Caco-2 (cell line): ENCODE measurements at regions of chr2 and their contacts with region 1.

Region 1: DNA sequence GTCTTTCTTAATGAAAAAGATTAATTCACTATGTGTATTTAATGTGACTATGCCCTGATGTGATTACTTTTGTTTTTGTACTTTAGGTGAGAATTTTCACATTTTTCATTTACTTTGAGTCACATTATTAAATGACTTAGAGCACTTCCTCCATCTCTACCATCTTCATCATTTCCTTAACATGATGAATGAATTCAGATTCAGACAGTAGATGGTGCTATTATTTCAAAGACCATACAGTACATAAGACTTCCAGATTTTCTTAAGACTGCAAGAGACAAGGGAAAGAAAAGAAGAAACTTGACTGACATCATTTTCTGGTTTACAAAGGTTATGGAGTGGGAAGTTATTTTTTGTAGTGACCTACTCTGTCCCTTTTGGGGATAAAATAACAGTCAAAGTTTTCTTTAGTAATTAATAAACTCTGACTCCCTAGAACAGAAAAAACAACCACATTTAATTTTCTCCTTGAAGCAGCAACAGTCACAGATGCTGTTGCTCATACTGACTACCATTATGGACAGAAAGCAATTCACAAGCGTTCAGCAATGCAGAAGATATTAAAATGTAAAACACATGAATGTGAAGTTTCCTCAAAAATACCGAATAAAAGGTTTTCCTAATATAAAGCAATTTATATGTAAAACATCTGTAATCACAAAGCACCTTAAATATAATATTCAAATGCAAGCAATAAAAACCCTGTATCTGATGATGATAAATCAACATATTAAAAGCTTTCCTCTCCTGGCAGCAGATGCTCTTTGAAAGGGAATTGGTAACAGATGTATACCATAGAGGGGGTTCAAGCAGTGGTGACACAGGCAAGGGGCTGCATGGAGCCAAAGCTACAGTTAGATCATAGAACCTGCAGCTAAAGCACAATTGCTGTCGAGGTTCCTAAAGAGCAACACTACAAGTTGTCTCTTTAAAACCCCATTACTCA is 1010.9 kb upstream of the NXPH2 start:
- DNase-seq: no peak
- H3K4me3 ChIP-seq: no peak overlapping the region
- H3K4me3 Mint-ChIP-seq: no peak overlapping the region
- H3K27ac Mint-ChIP-seq: no peak overlapping the region
- H3K4me1 ChIP-seq: no peaks in the 10 kb centered on the region
- H3K4me1 Mint-ChIP-seq: no peaks in the 10 kb centered on the region
- H3K27me3 ChIP-seq: no peaks in the 10 kb centered on the region
- H3K27me3 Mint-ChIP-seq: peaks cover 7% of the 10 kb centered on the region
- CTCF ChIP-seq: no peak

Region 2: GRCh38 chr2:139704606-139705005 is 86.5 kb before region 1 on chr2:
- CTCF ChIA-PET with region 1: no interaction called
- POLR2A ChIA-PET with region 1: no interaction called
- intact Hi-C with region 1: no loop called
- DNase-seq: no peak
- H3K4me3 ChIP-seq: no peak overlapping the region
- H3K4me3 Mint-ChIP-seq: no peak overlapping the region
- H3K27ac Mint-ChIP-seq: no peak overlapping the region
- H3K4me1 ChIP-seq: no peaks in the 10 kb centered on the region
- H3K4me1 Mint-ChIP-seq: no peaks in the 10 kb centered on the region
- H3K27me3 ChIP-seq: no peaks in the 10 kb centered on the region
- H3K27me3 Mint-ChIP-seq: peaks cover 5% of the 10 kb centered on the region
- CTCF ChIP-seq: no peak

Region 3: GRCh38 chr2:139946693-139947092 is 155.6 kb after region 1 on chr2:
- CTCF ChIA-PET with region 1: no interaction called
- POLR2A ChIA-PET with region 1: no interaction called
- intact Hi-C with region 1: loop called (anchors 1 kb)
- DNase-seq: no peak
- H3K4me3 ChIP-seq: no peak overlapping the region
- H3K4me3 Mint-ChIP-seq: no peak overlapping the region
- H3K27ac Mint-ChIP-seq: no peak overlapping the region
- H3K4me1 ChIP-seq: no peaks in the 10 kb centered on the region
- H3K4me1 Mint-ChIP-seq: no peaks in the 10 kb centered on the region
- H3K27me3 ChIP-seq: no peaks in the 10 kb centered on the region
- H3K27me3 Mint-ChIP-seq: peaks cover 12% of the 10 kb centered on the region
- CTCF ChIP-seq: peak; percentile 33 to 34

Region 4: GRCh38 chr2:139992078-139992477 is 201.0 kb after region 1 on chr2:
- CTCF ChIA-PET with region 1: no interaction called
- POLR2A ChIA-PET with region 1: no interaction called
- intact Hi-C with region 1: loop called (anchors 5 kb)
- DNase-seq: peak in 1 of 2 experiments; percentile 8
- H3K4me3 ChIP-seq: no peak overlapping the region
- H3K4me3 Mint-ChIP-seq: no peak overlapping the region
- H3K27ac Mint-ChIP-seq: no peak overlapping the region
- H3K4me1 ChIP-seq: no peaks in the 10 kb centered on the region
- H3K4me1 Mint-ChIP-seq: no peaks in the 10 kb centered on the region
- H3K27me3 ChIP-seq: no peaks in the 10 kb centered on the region
- H3K27me3 Mint-ChIP-seq: no peaks in the 10 kb centered on the region
- CTCF ChIP-seq: no peak

Region 5: GRCh38 chr2:140695163-140695562 is 904.1 kb after region 1 on chr2:
- CTCF ChIA-PET with region 1: no interaction called
- POLR2A ChIA-PET with region 1: no interaction called
- intact Hi-C with region 1: loop called (anchors 5 kb)
- DNase-seq: no peak
- H3K4me3 ChIP-seq: no peak overlapping the region
- H3K4me3 Mint-ChIP-seq: no peak overlapping the region
- H3K27ac Mint-ChIP-seq: no peak overlapping the region
- H3K4me1 ChIP-seq: no peaks in the 10 kb centered on the region
- H3K4me1 Mint-ChIP-seq: no peaks in the 10 kb centered on the region
- H3K27me3 ChIP-seq: no peaks in the 10 kb centered on the region
- H3K27me3 Mint-ChIP-seq: peaks cover 5% of the 10 kb centered on the region
- CTCF ChIP-seq: no peak